Activated CD4-positive, alpha-beta memory T cell treated with anti-CD3 and anti-CD28 coated beads for 36 hours (primary cell): ENCODE measurements at regions of chr1 and their contacts with region 1.

Region 1: DNA sequence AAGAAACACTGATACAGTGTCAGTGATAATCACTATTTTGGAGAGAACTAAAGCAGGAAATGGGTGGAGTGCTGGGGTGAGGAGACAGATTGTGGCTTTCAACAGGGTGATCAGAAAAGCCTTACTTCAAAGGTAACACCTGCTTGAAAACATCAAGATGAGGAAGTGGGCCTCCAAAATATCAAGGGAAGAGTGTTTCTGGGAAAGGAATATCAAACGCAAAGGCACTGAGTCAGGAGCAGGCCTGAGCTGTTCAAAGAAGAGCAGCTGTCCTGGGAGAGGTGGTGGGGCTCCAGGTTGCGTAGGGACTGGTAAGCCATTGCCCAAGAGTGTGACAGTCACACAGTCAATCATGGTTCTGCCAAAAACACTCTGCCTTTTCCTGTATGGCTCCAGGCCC is 47.1 kb upstream of the ATP1A1 start:
- DNase-seq: peak; percentile 56
- H3K4me3 Mint-ChIP-seq: peak overlapping the region; percentile 18
- H3K27ac Mint-ChIP-seq: peak overlapping the region; percentile 87
- H3K4me1 Mint-ChIP-seq: peaks cover 59% of the 10 kb centered on the region
- H3K27me3 Mint-ChIP-seq: no peaks in the 10 kb centered on the region

Region 2: GRCh38 chr1:116254776-116255175 is 71.1 kb before region 1 on chr1:
- CTCF ChIA-PET with region 1: no interaction called
- POLR2A ChIA-PET with region 1: no interaction called
- intact Hi-C with region 1: loop called (anchors 5 kb)
- DNase-seq: no peak
- H3K4me3 Mint-ChIP-seq: no peak overlapping the region
- H3K27ac Mint-ChIP-seq: no peak overlapping the region
- H3K4me1 Mint-ChIP-seq: peaks cover 13% of the 10 kb centered on the region
- H3K27me3 Mint-ChIP-seq: no peaks in the 10 kb centered on the region

Region 3: DNA sequence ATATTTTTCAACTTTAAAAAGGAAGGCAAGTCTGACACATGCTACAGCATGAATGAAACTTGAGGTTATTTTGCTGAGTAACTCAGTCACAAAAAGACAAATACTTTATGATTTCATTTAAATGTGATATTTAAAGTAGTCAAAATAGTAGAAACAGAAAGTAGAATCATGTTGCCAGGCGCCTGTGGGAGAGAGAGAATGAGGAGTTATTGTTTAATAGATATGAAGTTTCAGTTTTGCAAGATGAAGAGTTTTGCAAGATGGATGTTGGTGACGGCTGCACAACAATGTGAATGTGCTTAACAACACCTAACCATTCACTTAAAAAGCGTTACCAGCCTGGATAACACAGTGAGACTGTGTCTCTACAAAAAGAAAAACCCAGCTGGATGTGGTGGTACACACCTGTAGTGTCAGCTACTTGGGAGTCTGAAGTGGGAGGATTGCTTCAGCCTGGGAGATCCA is 26.5 kb after region 1 on chr1:
- CTCF ChIA-PET with region 1: no interaction called
- POLR2A ChIA-PET with region 1: no interaction called
- intact Hi-C with region 1: loop called (anchors 2 kb)
- DNase-seq: peak; percentile 39
- H3K4me3 Mint-ChIP-seq: peak overlapping the region; percentile 44
- H3K27ac Mint-ChIP-seq: peak overlapping the region; percentile 19
- H3K4me1 Mint-ChIP-seq: peaks cover 45% of the 10 kb centered on the region
- H3K27me3 Mint-ChIP-seq: no peaks in the 10 kb centered on the region